ENCODE measurements at regions of chr19 and their contacts with region 1.

Region 1: DNA sequence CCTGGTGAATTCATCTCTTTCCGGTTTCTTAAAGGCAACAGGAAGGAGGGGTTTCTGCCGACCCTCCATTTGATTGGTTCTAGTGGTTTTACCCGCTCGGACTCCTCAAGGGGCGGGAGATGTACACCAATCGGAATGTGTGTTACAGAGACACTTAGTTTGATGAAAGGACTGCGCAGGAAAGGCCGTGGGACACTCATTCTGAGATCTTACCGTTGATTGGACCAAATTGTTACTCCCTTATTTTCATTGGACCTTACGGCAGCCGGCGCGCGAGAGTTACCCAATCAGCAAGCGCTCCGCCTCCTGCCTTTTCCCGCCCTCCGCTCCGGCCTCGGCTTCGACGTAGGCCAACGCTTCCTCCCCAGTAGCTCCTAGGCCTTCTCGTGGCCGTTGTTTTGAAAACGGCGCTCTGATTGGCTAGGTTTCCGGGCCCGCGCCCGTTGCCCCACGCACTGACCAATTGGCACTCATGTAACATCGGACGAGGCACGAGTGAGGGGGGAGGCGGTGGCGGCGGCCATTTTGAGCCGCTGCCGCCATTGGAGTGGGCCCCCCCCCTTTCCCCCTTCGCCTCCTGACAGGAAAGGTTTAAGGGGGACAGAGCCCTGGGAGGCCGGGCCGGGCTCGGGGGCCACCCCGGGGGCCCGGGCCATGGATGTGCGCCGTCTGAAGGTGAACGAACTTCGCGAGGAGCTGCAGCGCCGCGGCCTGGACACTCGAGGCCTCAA is at the start of gene HNRNPUL1:
- DNase-seq: peak; percentile 100
- H3K4me3 ChIP-seq: peak within 1 kb of the TSS; percentile 87
- CTCF ChIP-seq: peak; percentile 36

Region 2: DNA sequence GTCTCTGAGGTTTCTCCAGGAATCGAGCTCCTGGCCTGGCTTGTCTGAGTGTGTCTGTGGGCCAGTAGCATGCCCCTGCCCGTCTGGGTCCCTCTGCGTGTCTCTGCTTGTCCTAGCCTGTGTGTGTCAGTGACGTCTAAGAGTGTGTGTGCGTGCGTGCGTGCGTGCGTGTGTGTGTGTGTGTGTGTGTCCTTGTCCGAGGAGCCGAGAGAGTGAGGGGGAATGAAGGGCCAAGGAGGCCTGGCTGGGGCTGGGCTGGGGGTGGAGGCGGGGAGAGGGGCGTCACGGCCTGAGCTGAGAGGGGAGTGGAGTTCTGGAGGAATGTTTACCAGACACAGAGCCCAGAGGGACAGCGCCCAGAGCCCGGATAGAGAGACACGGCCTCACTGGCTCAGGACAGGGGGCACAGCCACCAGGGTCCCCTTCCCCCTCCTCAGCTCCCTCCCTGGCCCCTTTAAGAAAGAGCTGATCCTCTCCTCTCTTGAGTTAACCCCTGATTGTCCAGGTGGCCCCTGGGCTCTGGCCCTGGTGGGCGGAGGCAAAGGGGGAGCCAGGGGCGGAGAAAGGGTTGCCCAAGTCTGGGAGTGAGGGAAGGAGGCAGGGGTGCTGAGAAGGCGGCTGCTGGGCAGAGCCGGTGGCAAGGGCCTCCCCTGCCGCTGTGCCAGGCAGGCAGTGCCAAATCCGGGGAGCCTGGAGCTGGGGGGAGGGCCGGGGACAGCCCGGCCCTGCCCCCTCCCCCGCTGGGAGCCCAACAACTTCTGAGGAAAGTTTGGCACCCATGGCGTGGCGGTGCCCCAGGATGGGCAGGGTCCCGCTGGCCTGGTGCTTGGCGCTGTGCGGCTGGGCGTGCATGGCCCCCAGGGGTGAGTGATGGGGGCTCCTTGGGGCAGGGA is 45.2 kb before region 1 on chr19 and contains the start of gene AXL:
- CTCF ChIA-PET with region 1: interaction called, 24 read pairs
- POLR2A ChIA-PET with region 1: interaction called, 18 read pairs
- DNase-seq: peak; percentile 63
- H3K4me3 ChIP-seq: peak within 1 kb of the TSS; percentile 90
- CTCF ChIP-seq: no peak

Region 3: DNA sequence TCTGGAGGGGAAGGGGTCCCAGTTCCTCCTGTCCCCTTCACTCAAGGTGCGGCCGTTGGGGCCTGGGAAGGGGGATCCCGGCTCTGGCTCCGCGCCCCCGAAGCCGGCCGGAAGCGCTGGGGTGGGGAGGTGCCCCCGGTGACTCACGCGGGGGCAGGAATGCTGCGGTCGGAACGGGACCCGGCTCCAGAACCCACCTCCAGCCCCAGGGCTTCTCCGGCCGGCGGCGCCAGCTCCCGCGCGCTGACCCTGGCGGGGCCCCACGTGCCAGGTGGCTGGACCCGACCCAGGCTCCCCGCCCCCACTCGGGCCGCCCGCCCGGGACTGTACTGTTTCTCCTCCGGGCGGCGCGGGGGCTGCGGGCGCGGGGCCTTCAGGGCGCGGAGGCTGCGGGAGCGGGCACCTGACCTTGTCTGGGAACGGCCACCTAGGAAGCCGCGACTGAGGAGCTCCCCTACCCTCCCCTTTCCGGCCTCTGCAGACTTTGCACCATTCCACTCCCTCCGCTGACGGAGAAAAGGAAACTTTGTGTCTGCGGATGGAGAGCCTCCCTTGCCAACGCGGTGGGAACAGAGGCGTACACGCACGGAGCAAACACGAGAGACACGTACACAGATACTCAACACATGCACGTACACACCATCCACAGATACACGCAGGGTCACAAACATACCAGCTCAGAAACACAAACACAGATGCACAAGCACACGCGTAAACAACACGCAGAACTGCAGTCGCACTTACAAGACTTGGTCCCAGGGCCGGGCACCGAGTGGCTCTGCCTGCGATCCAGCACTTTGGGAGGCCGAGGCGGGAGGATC is 37.8 kb before region 1 on chr19:
- CTCF ChIA-PET with region 1: interaction called, 24 read pairs
- POLR2A ChIA-PET with region 1: interaction called, 28 read pairs
- DNase-seq: no peak
- H3K4me3 ChIP-seq: peak overlapping the region; percentile 47
- CTCF ChIP-seq: no peak

Region 4: GRCh38 chr19:41248895-41249294 is 15.1 kb before region 1 on chr19:
- CTCF ChIA-PET with region 1: interaction called, 64 read pairs
- POLR2A ChIA-PET with region 1: interaction called, 5 read pairs
- DNase-seq: no peak
- H3K4me3 ChIP-seq: no peak overlapping the region
- CTCF ChIP-seq: no peak